Activated CD4-positive, alpha-beta memory T cell treated with anti-CD3 and anti-CD28 coated beads for 36 hours (primary cell): ENCODE measurements at regions of chr2 and their contacts with region 1.

Region 1: DNA sequence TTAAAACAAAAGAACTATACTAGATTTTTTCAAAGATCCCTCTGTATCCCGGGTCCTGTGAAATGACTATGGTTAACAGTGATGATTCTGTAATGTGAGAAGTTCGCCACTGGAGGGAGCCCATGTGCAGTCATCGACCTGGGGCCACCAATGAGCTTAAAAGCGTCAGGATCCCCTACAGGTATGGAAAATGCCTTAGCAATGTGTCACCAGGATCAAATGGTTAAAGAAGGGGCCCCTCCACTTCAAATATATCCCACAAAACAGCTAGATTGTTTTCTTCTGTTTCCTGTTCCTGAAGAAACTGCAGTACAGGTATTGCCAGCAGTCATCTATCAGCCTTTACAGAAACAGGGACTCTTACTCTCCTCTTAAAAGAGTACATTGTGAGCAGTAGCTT is 15.3 kb downstream of the CHRNA1 start:
- DNase-seq: peak; percentile 81
- H3K4me3 Mint-ChIP-seq: no peak overlapping the region
- H3K27ac Mint-ChIP-seq: peak overlapping the region; percentile 45
- H3K4me1 Mint-ChIP-seq: peaks cover 45% of the 10 kb centered on the region
- H3K27me3 Mint-ChIP-seq: peaks cover 2% of the 10 kb centered on the region

Region 2: GRCh38 chr2:174593574-174594203 is 155.3 kb before region 1 on chr2:
- CTCF ChIA-PET with region 1: no interaction called
- POLR2A ChIA-PET with region 1: no interaction called
- intact Hi-C with region 1: loop called (anchors 2 kb)
- DNase-seq: peak; percentile 79
- H3K4me3 Mint-ChIP-seq: peak overlapping the region; percentile 81
- H3K27ac Mint-ChIP-seq: peak overlapping the region; percentile 98
- H3K4me1 Mint-ChIP-seq: peaks cover 71% of the 10 kb centered on the region
- H3K27me3 Mint-ChIP-seq: no peaks in the 10 kb centered on the region

Region 3: GRCh38 chr2:174717273-174717672 is 31.7 kb before region 1 on chr2:
- CTCF ChIA-PET with region 1: interaction called, 9 read pairs
- POLR2A ChIA-PET with region 1: no interaction called
- intact Hi-C with region 1: loop called (anchors 5 kb)
- DNase-seq: peak; percentile 23
- H3K4me3 Mint-ChIP-seq: peak overlapping the region; percentile 28
- H3K27ac Mint-ChIP-seq: peak overlapping the region; percentile 43
- H3K4me1 Mint-ChIP-seq: peaks cover 25% of the 10 kb centered on the region
- H3K27me3 Mint-ChIP-seq: no peaks in the 10 kb centered on the region

Region 4: GRCh38 chr2:174771631-174772471 is 22.9 kb after region 1 on chr2:
- CTCF ChIA-PET with region 1: interaction called, 58 read pairs
- POLR2A ChIA-PET with region 1: no interaction called
- intact Hi-C with region 1: no loop called
- DNase-seq: peak; percentile 72
- H3K4me3 Mint-ChIP-seq: no peak overlapping the region
- H3K27ac Mint-ChIP-seq: no peak overlapping the region
- H3K4me1 Mint-ChIP-seq: peaks cover 9% of the 10 kb centered on the region
- H3K27me3 Mint-ChIP-seq: no peaks in the 10 kb centered on the region

Region 5: DNA sequence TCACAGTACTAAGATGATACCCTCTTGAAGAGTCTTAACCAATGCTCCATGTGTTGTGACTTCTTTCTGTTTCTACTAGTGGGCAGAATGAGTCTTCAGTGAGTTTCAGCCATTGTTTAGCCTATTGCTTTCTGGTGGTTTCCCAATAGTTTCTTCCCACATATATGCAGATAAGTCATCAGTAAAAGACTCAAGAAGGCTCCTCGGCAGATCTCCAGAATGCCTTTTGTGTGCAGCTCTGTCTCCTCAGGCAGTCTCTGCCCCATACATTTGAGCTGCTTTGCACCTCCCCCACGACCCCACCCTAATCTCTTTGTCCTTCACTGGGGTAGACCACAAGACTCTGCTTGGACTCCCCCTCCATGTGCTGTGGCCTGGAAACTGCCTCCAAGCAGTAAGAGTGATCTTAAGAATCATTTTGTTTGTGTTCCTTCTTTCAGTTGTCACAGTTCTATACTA is 86.9 kb after region 1 on chr2:
- CTCF ChIA-PET with region 1: interaction called, 4 read pairs
- POLR2A ChIA-PET with region 1: no interaction called
- intact Hi-C with region 1: loop called (anchors 1 kb)
- DNase-seq: peak; percentile 67
- H3K4me3 Mint-ChIP-seq: no peak overlapping the region
- H3K27ac Mint-ChIP-seq: peak overlapping the region; percentile 82
- H3K4me1 Mint-ChIP-seq: peaks cover 36% of the 10 kb centered on the region
- H3K27me3 Mint-ChIP-seq: no peaks in the 10 kb centered on the region

Region 6: DNA sequence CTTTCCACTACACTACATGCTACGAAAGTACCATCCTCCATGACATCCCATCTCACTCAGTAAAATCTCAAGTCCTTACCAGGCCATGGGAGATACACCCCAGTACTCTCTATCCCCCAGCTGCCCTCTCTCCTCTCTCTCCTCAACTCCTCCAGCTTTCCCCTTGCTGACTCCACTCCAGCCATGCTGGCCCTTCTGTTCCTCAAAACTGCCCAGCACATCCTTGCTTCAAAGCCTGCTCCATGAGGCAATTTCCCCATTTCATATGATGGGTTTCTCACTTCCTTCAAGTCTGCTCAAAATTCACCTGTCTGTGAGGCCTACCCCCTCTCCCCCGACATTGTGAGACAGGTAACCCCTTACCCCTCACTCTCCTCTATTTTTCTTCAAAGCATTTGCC is 247.7 kb after region 1 on chr2:
- CTCF ChIA-PET with region 1: interaction called, 10 read pairs
- POLR2A ChIA-PET with region 1: no interaction called
- intact Hi-C with region 1: no loop called
- DNase-seq: no peak
- H3K4me3 Mint-ChIP-seq: no peak overlapping the region
- H3K27ac Mint-ChIP-seq: no peak overlapping the region
- H3K4me1 Mint-ChIP-seq: peaks cover 3% of the 10 kb centered on the region
- H3K27me3 Mint-ChIP-seq: peaks cover 16% of the 10 kb centered on the region

Region 7: GRCh38 chr2:175167792-175168563 is 419.0 kb after region 1 on chr2 and contains the start of gene ATF2:
- CTCF ChIA-PET with region 1: no interaction called
- POLR2A ChIA-PET with region 1: interaction called, 3 read pairs
- intact Hi-C with region 1: loop called (anchors 2 kb)
- DNase-seq: peak; percentile 99
- H3K4me3 Mint-ChIP-seq: peak within 1 kb of the TSS; percentile 100
- H3K27ac Mint-ChIP-seq: peak within 1 kb of the TSS; percentile 97
- H3K4me1 Mint-ChIP-seq: peaks cover 41% of the 10 kb centered on the region
- H3K27me3 Mint-ChIP-seq: no peaks in the 10 kb centered on the region
- total RNA-seq, gene ATF2: 46.9 to 48.5 TPM

Region 8: GRCh38 chr2:175621821-175622220 is 872.9 kb after region 1 on chr2:
- CTCF ChIA-PET with region 1: no interaction called
- POLR2A ChIA-PET with region 1: no interaction called
- intact Hi-C with region 1: no loop called
- DNase-seq: no peak
- H3K4me3 Mint-ChIP-seq: no peak overlapping the region
- H3K27ac Mint-ChIP-seq: no peak overlapping the region
- H3K4me1 Mint-ChIP-seq: no peaks in the 10 kb centered on the region
- H3K27me3 Mint-ChIP-seq: peaks cover 1% of the 10 kb centered on the region